ENCODE measurements at regions of chr2 and their contacts with region 1.

Region 1: GRCh38 chr2:130332271-130333073 is 10.2 kb upstream of the IMP4 start:
- DNase-seq: peak; percentile 82
- H3K4me3 ChIP-seq: no peak overlapping the region
- H3K27ac ChIP-seq: no peak overlapping the region
- H3K4me1 ChIP-seq: peaks cover 19% of the 10 kb centered on the region
- H3K27me3 ChIP-seq: no peaks in the 10 kb centered on the region
- CTCF ChIP-seq: peak; percentile 91 to 97

Region 2: GRCh38 chr2:129923265-129924091 is 409.0 kb before region 1 on chr2:
- CTCF ChIA-PET with region 1: no interaction called
- dilution Hi-C with region 1: no loop called
- in situ Hi-C with region 1: loop called in 1 of 2 experiments (anchors 25 kb)
- intact Hi-C with region 1: loop called (anchors 5 kb)
- DNase-seq: peak; percentile 25
- H3K4me3 ChIP-seq: no peak overlapping the region
- H3K27ac ChIP-seq: no peak overlapping the region
- H3K4me1 ChIP-seq: no peaks in the 10 kb centered on the region
- H3K27me3 ChIP-seq: peaks cover 6% of the 10 kb centered on the region
- CTCF ChIP-seq: peak; percentile 53 to 56

Region 3: GRCh38 chr2:129936334-129936934 is 396.0 kb before region 1 on chr2:
- CTCF ChIA-PET with region 1: interaction called, 7 read pairs
- dilution Hi-C with region 1: no loop called
- in situ Hi-C with region 1: loop called (anchors 10 to 25 kb)
- intact Hi-C with region 1: loop called (anchors 1 kb)
- DNase-seq: no peak
- H3K4me3 ChIP-seq: no peak overlapping the region
- H3K27ac ChIP-seq: no peak overlapping the region
- H3K4me1 ChIP-seq: no peaks in the 10 kb centered on the region
- H3K27me3 ChIP-seq: no peaks in the 10 kb centered on the region
- CTCF ChIP-seq: peak; percentile 36 to 60

Region 4: GRCh38 chr2:130181325-130181879 is 151.1 kb before region 1 on chr2 and contains the start of gene SMPD4:
- CTCF ChIA-PET with region 1: interaction called, 30 read pairs
- dilution Hi-C with region 1: no loop called
- in situ Hi-C with region 1: loop called (anchors 5 to 10 kb)
- intact Hi-C with region 1: loop called (anchors 1 kb)
- DNase-seq: peak; percentile 95
- H3K4me3 ChIP-seq: peak within 1 kb of the TSS; percentile 73 to 99 (median 99)
- H3K27ac ChIP-seq: peak within 1 kb of the TSS; percentile 89
- H3K4me1 ChIP-seq: peaks cover 13% of the 10 kb centered on the region
- H3K27me3 ChIP-seq: no peaks in the 10 kb centered on the region
- CTCF ChIP-seq: no peak
- total RNA-seq, gene SMPD4: 21.8 to 69.3 TPM

Region 5: GRCh38 chr2:130252880-130253645 is 79.4 kb before region 1 on chr2:
- CTCF ChIA-PET with region 1: interaction called, 4 read pairs
- dilution Hi-C with region 1: no loop called
- in situ Hi-C with region 1: no loop called
- intact Hi-C with region 1: loop called (anchors 5 kb)
- DNase-seq: peak; percentile 56
- H3K4me3 ChIP-seq: peak overlapping the region in 1 of 3 experiments; percentile 23
- H3K27ac ChIP-seq: no peak overlapping the region
- H3K4me1 ChIP-seq: no peaks in the 10 kb centered on the region
- H3K27me3 ChIP-seq: peaks cover 10% of the 10 kb centered on the region
- CTCF ChIP-seq: no peak

Measured in mammary epithelial cell (primary cell).